HAP-1 (cell line): ENCODE measurements at regions of chr3 and their contacts with region 1.

Region 1: GRCh38 chr3:141452036-141452435 is 34.8 kb upstream of the RASA2 start:
- DNase-seq: no peak
- H3K4me3 ChIP-seq: no peak overlapping the region
- H3K4me1 ChIP-seq: no peaks in the 10 kb centered on the region
- H3K27me3 ChIP-seq: no peaks in the 10 kb centered on the region

Region 2: DNA sequence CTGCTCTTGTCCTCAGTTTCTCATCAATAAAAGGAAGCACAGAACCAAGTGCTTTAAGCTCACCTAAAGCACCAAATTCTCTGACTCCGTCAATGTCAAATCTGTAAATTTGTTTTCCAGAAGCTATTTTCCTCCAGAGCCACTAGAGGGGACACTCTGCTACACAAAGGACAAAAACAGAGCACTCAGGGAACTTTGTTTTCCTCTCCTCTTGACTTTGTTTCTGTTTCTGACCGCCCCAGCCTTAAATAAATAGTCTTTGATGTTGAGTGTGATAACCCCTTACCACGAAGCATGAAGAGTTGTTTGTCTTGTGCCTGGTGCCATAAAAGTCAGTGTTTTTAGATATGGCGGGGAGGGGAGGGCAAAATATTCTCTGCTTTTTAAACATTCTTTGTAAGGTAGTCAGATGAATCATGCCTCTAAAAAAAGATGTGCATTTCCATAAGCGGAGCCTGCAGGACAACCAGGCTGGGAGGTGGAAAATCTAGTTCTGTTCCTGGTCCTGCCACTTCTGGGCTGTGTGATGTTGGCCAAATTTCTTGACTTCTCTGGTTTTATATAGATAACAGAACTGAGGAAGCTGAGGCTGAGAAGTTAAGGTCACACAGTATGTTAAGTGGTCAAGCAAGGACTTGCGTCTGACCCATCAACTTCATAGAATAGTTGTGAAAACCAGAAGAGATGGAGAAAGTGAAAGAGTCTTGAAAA is 91.0 kb before region 1 on chr3:
- in situ Hi-C with region 1: loop called (anchors 10 kb)
- DNase-seq: peak in 1 of 2 experiments; percentile 65
- H3K4me3 ChIP-seq: no peak overlapping the region
- H3K4me1 ChIP-seq: peaks cover 7% of the 10 kb centered on the region; the same call in 1 of the 2 replicates
- H3K27me3 ChIP-seq: no peaks in the 10 kb centered on the region; the same call in 1 of the 2 replicates